WTC11 (cell line): ENCODE measurements at regions of chr14 and their contacts with region 1.

Region 1: GRCh38 chr14:49461529-49462401 is 124.4 kb downstream of the RPS29 start:
- DNase-seq: peak; percentile 31
- ATAC-seq: peak; percentile 72
- H3K4me3 Mint-ChIP-seq: no peak overlapping the region
- H3K27ac Mint-ChIP-seq: no peak overlapping the region
- H3K4me1 Mint-ChIP-seq: peaks cover 21% of the 10 kb centered on the region
- H3K27me3 Mint-ChIP-seq: no peaks in the 10 kb centered on the region
- CTCF ChIP-seq: peak; percentile 43; the same call in 1 of the 2 replicates

Region 2: GRCh38 chr14:49447540-49448107 is 14.1 kb before region 1 on chr14:
- CTCF ChIA-PET with region 1: interaction called, 22 read pairs
- POLR2A ChIA-PET with region 1: no interaction called
- DNase-seq: no peak
- ATAC-seq: no peak
- H3K4me3 Mint-ChIP-seq: no peak overlapping the region
- H3K27ac Mint-ChIP-seq: no peak overlapping the region
- H3K4me1 Mint-ChIP-seq: peaks cover 32% of the 10 kb centered on the region
- H3K27me3 Mint-ChIP-seq: peaks cover 6% of the 10 kb centered on the region; the same call in 1 of the 2 replicates
- CTCF ChIP-seq: no peak

Region 3: DNA sequence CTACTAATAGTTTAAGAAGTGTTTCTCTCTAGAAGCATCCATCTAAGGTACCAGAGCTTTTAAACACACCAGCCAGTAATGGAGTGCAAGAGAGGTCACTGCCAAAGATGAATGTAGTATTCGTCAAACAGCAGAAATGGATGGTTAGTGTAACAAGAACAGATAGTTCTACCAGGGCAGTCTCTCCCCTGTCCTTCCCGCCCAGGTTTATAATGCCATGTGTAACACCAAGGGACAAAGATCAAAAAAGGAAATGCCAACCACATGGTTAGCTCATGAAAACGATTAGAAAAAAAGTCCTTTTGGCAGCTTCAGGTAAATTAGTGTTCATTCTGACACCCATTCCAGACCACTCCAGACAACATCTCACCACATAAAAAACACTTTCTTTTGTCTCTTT is 23.5 kb after region 1 on chr14:
- CTCF ChIA-PET with region 1: interaction called, 52 read pairs
- POLR2A ChIA-PET with region 1: no interaction called
- DNase-seq: no peak
- ATAC-seq: no peak
- H3K4me3 Mint-ChIP-seq: no peak overlapping the region
- H3K27ac Mint-ChIP-seq: no peak overlapping the region
- H3K4me1 Mint-ChIP-seq: peaks cover 7% of the 10 kb centered on the region
- H3K27me3 Mint-ChIP-seq: no peaks in the 10 kb centered on the region
- CTCF ChIP-seq: no peak

Region 4: DNA sequence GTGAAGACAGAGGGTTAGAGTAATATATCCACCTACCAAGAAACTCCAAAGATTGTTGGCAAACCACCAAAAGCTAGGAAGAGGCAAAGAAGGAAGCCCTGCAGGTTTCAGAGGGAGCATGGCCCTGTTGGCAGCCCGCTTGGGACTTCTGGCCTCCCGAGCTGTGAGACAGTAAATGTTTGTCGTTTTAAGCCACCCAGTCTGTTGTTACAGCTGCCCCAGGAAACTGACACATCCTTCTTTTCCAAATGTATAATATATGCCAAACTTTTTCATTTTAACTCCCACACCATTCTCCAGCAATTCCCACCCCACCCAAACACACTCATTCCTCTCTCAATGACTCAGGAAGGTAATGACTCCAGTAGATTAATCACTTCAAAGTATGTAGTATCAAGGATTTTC is 50.4 kb after region 1 on chr14:
- CTCF ChIA-PET with region 1: interaction called, 11 read pairs
- POLR2A ChIA-PET with region 1: no interaction called
- DNase-seq: no peak
- ATAC-seq: no peak
- H3K4me3 Mint-ChIP-seq: no peak overlapping the region
- H3K27ac Mint-ChIP-seq: no peak overlapping the region
- H3K4me1 Mint-ChIP-seq: peaks cover under 1% of the 10 kb centered on the region
- H3K27me3 Mint-ChIP-seq: peaks cover 14% of the 10 kb centered on the region
- CTCF ChIP-seq: no peak

Region 5: GRCh38 chr14:49598485-49599300 is 136.9 kb after region 1 on chr14 and contains the start of gene LRR1:
- CTCF ChIA-PET with region 1: interaction called, 11 read pairs
- POLR2A ChIA-PET with region 1: no interaction called
- DNase-seq: peak; percentile 83
- ATAC-seq: peak; percentile 74
- H3K4me3 Mint-ChIP-seq: peak within 1 kb of the TSS; percentile 84
- H3K27ac Mint-ChIP-seq: peak within 1 kb of the TSS; percentile 94
- H3K4me1 Mint-ChIP-seq: peaks cover 10% of the 10 kb centered on the region
- H3K27me3 Mint-ChIP-seq: peaks cover 5% of the 10 kb centered on the region
- CTCF ChIP-seq: no peak
- total RNA-seq, gene LRR1: 32.5 to 42.6 TPM (median 32.8 TPM) in 3 replicates